Activated B cell treated with CpG ODN at 0.5 μM for 24 hours (primary cell): ENCODE measurements at regions of chr2 and their contacts with region 1.

Region 1: GRCh38 chr2:183124222-183124956 is at the start of gene NUP35:
- DNase-seq: peak; percentile 70
- ATAC-seq: peak; percentile 96
- H3K4me3 Mint-ChIP-seq: peak within 1 kb of the TSS; percentile 96
- H3K27ac Mint-ChIP-seq: peak within 1 kb of the TSS; percentile 95
- H3K4me1 Mint-ChIP-seq: peaks cover 29% of the 10 kb centered on the region
- H3K27me3 Mint-ChIP-seq: peaks cover 11% of the 10 kb centered on the region
- CTCF ChIP-seq: no peak
- total RNA-seq, gene NUP35: 19.6 and 25.1 TPM in 2 replicates

Region 2: DNA sequence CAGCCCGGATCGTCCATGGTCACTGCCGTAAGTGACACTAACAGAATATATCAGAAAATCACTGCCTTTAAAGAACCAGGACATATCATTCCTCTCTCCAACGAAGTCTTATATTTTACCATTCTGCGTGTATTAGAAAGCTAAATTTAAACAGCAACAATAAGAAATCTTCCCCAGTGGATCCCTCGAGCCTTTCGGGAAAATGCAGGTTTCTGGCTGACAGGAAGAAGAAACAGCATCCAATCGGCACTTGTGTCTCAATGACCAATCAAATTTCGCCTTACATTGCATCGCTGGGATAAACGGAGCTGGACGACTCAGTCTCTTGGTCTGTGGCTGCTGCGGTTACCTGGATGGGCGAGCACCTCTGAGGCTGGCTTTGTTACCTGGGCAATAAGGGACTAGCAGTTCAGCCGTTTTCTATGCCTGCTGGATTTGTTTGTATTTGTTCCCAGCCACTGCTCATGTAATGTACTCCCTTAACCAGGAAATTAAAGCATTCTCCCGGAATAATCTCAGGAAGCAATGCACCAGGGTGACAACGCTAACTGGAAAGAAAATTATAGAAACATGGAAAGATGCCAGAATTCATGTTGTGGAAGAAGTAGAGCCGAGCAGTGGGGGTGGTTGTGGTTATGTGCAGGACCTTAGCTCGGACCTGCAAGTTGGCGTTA is 45.8 kb before region 1 on chr2 and contains the start of gene DUSP19:
- CTCF ChIA-PET with region 1: no interaction called
- POLR2A ChIA-PET with region 1: interaction called, 3 read pairs
- intact Hi-C with region 1: loop called (anchors 1 kb)
- DNase-seq: peak; percentile 61
- ATAC-seq: peak; percentile 90
- H3K4me3 Mint-ChIP-seq: peak within 1 kb of the TSS; percentile 93
- H3K27ac Mint-ChIP-seq: peak within 1 kb of the TSS; percentile 76
- H3K4me1 Mint-ChIP-seq: peaks cover 9% of the 10 kb centered on the region
- H3K27me3 Mint-ChIP-seq: peaks cover 6% of the 10 kb centered on the region
- CTCF ChIP-seq: no peak
- total RNA-seq, gene DUSP19: 0.31 and 0.49 TPM in 2 replicates